T-cell (primary cell): ENCODE measurements at regions of chr7 and their contacts with region 1.

Region 1: GRCh38 chr7:94529516-94529915 is 19.9 kb downstream of the CASD1 start:
- DNase-seq: no peak
- ATAC-seq: no peak
- H3K4me3 ChIP-seq: no peak overlapping the region
- H3K4me3 Mint-ChIP-seq: no peak overlapping the region
- H3K27ac ChIP-seq: no peak overlapping the region
- H3K27ac Mint-ChIP-seq: no peak overlapping the region
- H3K4me1 ChIP-seq: no peaks in the 10 kb centered on the region
- H3K4me1 Mint-ChIP-seq: no peaks in the 10 kb centered on the region
- H3K27me3 ChIP-seq: no peaks in the 10 kb centered on the region
- H3K27me3 Mint-ChIP-seq: no peaks in the 10 kb centered on the region

Region 2: DNA sequence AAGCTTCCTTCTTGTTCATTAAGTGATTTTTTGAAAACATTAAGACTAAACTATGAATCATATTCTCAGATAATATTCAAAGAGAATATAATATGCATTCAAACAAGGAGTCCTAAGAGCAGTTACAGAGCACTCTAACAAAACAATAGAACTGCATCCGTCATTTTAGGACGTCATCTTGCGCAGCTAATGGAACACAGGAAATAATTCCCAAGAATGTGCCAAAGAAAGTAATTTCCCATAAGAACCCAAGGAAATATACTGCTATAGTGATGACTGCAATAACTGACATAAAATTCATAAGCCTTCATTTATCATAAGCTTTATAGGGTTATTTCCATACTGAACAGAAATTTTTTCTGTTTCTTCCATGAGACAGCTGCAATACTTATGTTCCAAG is 48.2 kb before region 1 on chr7:
- CTCF ChIA-PET with region 1: no interaction called
- POLR2A ChIA-PET with region 1: no interaction called
- DNase-seq: no peak
- ATAC-seq: no peak
- H3K4me3 ChIP-seq: no peak overlapping the region
- H3K4me3 Mint-ChIP-seq: no peak overlapping the region
- H3K27ac ChIP-seq: no peak overlapping the region
- H3K27ac Mint-ChIP-seq: no peak overlapping the region
- H3K4me1 ChIP-seq: no peaks in the 10 kb centered on the region
- H3K4me1 Mint-ChIP-seq: no peaks in the 10 kb centered on the region
- H3K27me3 ChIP-seq: peaks cover 0 to 4% of the 10 kb centered on the region in 2 experiments
- H3K27me3 Mint-ChIP-seq: peaks cover 21 to 27% of the 10 kb centered on the region in 2 donors

Region 3: GRCh38 chr7:94511745-94512144 is 17.8 kb before region 1 on chr7:
- CTCF ChIA-PET with region 1: interaction called in 1 of 2 experiments, 11 read pairs
- POLR2A ChIA-PET with region 1: interaction called in 1 of 2 experiments, 4 read pairs
- DNase-seq: no peak
- ATAC-seq: no peak
- H3K4me3 ChIP-seq: no peak overlapping the region
- H3K4me3 Mint-ChIP-seq: peak overlapping the region in 2 of 3 donors; percentile 85 to 92
- H3K27ac ChIP-seq: no peak overlapping the region
- H3K27ac Mint-ChIP-seq: peak overlapping the region; percentile 73 to 92
- H3K4me1 ChIP-seq: peaks cover 17 to 25% of the 10 kb centered on the region in 2 experiments
- H3K4me1 Mint-ChIP-seq: peaks cover 57 to 71% (median 58%) of the 10 kb centered on the region in 3 donors
- H3K27me3 ChIP-seq: no peaks in the 10 kb centered on the region
- H3K27me3 Mint-ChIP-seq: no peaks in the 10 kb centered on the region

Region 4: GRCh38 chr7:94547126-94547525 is 17.6 kb after region 1 on chr7:
- CTCF ChIA-PET with region 1: no interaction called
- POLR2A ChIA-PET with region 1: no interaction called
- DNase-seq: no peak
- ATAC-seq: no peak
- H3K4me3 ChIP-seq: no peak overlapping the region
- H3K4me3 Mint-ChIP-seq: no peak overlapping the region
- H3K27ac ChIP-seq: no peak overlapping the region
- H3K27ac Mint-ChIP-seq: no peak overlapping the region
- H3K4me1 ChIP-seq: no peaks in the 10 kb centered on the region
- H3K4me1 Mint-ChIP-seq: no peaks in the 10 kb centered on the region
- H3K27me3 ChIP-seq: no peaks in the 10 kb centered on the region
- H3K27me3 Mint-ChIP-seq: no peaks in the 10 kb centered on the region